GM12878 (cell line): ENCODE measurements at regions of chr10 and their contacts with region 1.

Region 1: GRCh38 chr10:117537436-117537903 is 5.1 kb upstream of the EMX2 start:
- DNase-seq: no peak
- ATAC-seq: peak; percentile 80
- H3K4me3 ChIP-seq: no peak overlapping the region
- H3K27ac ChIP-seq: no peak overlapping the region
- H3K4me1 ChIP-seq: peaks cover 7% of the 10 kb centered on the region
- H3K27me3 ChIP-seq: peaks cover 13 to 23% of the 10 kb centered on the region in 2 experiments
- CTCF ChIP-seq: peak; percentile 61 to 71 (median 67); a peak in 5 of 6 replicates
- EP300 ChIP-seq: no peak
- POLR2A ChIP-seq: no peak
- RAD21 ChIP-seq: peak; percentile 88

Region 2: DNA sequence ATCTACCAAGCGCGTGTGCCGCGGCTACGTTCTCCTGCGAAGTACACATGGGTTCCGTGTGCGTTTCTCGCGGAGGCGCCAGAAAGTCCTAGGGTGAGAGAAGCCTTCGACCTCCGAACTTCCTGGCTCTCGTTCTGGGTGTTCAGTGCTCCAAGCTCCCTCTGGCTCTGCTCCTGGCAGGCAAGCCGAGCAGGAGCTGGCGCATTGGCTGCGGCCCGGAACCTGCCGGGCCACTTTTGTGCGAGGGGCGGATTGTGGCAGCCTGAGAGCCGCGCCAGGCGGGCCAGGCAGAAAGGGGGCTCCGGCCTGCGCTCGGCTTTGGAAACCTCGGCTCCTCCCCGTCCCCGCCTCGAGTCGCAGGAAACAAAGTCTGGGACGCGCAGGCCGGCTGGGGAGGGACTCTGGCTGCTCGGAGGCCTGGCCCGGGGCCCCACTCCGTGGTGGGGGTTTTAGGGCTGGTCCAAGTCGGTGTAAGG is 14.7 kb after region 1 on chr10:
- CTCF ChIA-PET with region 1: interaction called, 8 read pairs
- POLR2A ChIA-PET with region 1: no interaction called
- RAD21 ChIA-PET with region 1: interaction called, 13 read pairs
- SMC1A ChIA-PET with region 1: interaction called, 13 read pairs
- in situ Hi-C with region 1: no loop called
- intact Hi-C with region 1: no loop called
- DNase-seq: no peak
- ATAC-seq: no peak
- H3K4me3 ChIP-seq: no peak overlapping the region
- H3K27ac ChIP-seq: no peak overlapping the region
- H3K4me1 ChIP-seq: no peaks in the 10 kb centered on the region
- H3K27me3 ChIP-seq: peaks cover 24 to 26% of the 10 kb centered on the region in 2 experiments
- CTCF ChIP-seq: no peak
- EP300 ChIP-seq: no peak
- POLR2A ChIP-seq: no peak
- RAD21 ChIP-seq: no peak

Region 3: GRCh38 chr10:117616179-117616578 is 78.7 kb after region 1 on chr10:
- CTCF ChIA-PET with region 1: interaction called, 16 read pairs
- POLR2A ChIA-PET with region 1: no interaction called
- RAD21 ChIA-PET with region 1: interaction called, 14 read pairs
- SMC1A ChIA-PET with region 1: interaction called, 30 read pairs
- in situ Hi-C with region 1: no loop called
- intact Hi-C with region 1: no loop called
- DNase-seq: peak; percentile 23
- ATAC-seq: peak; percentile 76
- H3K4me3 ChIP-seq: no peak overlapping the region
- H3K27ac ChIP-seq: no peak overlapping the region
- H3K4me1 ChIP-seq: peaks cover 7% of the 10 kb centered on the region
- H3K27me3 ChIP-seq: no peaks in the 10 kb centered on the region
- CTCF ChIP-seq: no peak
- EP300 ChIP-seq: peak in 1 of 2 experiments; percentile 78; a peak in 1 of 4 replicates
- POLR2A ChIP-seq: no peak
- RAD21 ChIP-seq: no peak

Region 4: GRCh38 chr10:117653170-117653515 is 115.7 kb after region 1 on chr10:
- CTCF ChIA-PET with region 1: interaction called, 10 read pairs
- POLR2A ChIA-PET with region 1: no interaction called
- RAD21 ChIA-PET with region 1: interaction called, 55 read pairs
- SMC1A ChIA-PET with region 1: interaction called, 21 read pairs
- in situ Hi-C with region 1: no loop called
- intact Hi-C with region 1: loop called (anchors 10 kb)
- DNase-seq: peak; percentile 98
- ATAC-seq: peak; percentile 87
- H3K4me3 ChIP-seq: no peak overlapping the region
- H3K27ac ChIP-seq: peak overlapping the region; percentile 75
- H3K4me1 ChIP-seq: peaks cover 46% of the 10 kb centered on the region
- H3K27me3 ChIP-seq: no peaks in the 10 kb centered on the region
- CTCF ChIP-seq: no peak
- EP300 ChIP-seq: peak; percentile 99
- POLR2A ChIP-seq: no peak
- RAD21 ChIP-seq: peak; percentile 17; the same call in 1 of the 2 replicates

Region 5: DNA sequence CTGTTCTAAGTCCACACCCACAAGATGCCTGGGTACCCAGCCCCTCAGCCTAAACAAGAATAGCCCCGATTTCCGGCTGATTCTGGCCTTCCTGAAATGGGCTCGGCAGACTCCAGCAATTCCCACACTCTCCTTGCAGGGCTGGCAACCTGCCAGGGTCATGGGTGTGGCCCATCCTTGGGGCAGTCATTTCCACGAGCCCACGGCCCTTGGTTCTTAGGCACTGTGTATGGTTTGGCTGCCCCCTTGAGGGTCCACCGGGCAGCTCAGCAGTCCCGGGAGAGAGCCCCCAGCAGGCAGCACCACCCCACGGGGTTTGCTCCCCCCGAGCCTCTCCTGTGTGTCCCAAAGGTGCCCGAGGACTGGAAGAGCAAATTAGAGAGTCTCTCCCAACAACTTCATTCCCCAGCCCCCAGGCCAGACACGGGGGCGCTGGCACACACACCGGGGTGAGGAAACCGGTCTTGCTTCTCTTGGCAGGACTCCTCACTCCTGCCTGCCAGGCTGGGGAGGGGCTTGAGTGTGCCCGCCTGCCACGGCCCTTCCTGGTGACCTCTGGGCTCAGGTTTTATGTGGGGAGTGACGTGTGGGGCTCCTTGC is 147.3 kb after region 1 on chr10:
- CTCF ChIA-PET with region 1: interaction called, 7 read pairs
- POLR2A ChIA-PET with region 1: no interaction called
- RAD21 ChIA-PET with region 1: interaction called, 4 read pairs
- SMC1A ChIA-PET with region 1: interaction called, 5 read pairs
- in situ Hi-C with region 1: no loop called
- intact Hi-C with region 1: loop called (anchors 10 kb)
- DNase-seq: no peak
- ATAC-seq: peak; percentile 68
- H3K4me3 ChIP-seq: no peak overlapping the region
- H3K27ac ChIP-seq: no peak overlapping the region
- H3K4me1 ChIP-seq: no peaks in the 10 kb centered on the region
- H3K27me3 ChIP-seq: peaks cover 0 to 12% of the 10 kb centered on the region in 2 experiments; a peak in 1 of 4 replicates
- CTCF ChIP-seq: peak; percentile 19 to 41 (median 39); a peak in 4 of 6 replicates
- EP300 ChIP-seq: no peak
- POLR2A ChIP-seq: no peak
- RAD21 ChIP-seq: peak; percentile 63

Region 6: DNA sequence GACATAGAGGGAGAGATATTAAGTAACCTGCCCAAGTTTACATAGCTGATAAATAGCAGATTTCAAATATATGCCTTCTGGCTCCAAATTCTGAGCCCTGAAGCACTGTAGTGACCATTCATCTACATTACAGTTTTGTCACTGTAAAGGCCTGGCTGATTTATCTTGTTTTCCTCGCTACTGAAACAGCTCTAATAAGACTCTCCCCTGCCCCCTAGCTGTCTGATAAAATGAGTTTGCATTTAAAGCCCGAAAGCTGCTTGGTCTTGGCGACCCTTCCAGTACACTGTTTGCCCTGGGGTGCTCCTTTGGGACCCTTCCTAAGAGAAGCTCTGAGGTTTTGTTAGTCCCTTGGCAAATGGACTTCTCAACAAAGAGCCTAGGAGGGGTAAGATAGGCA is 569.0 kb after region 1 on chr10:
- CTCF ChIA-PET with region 1: interaction called, 10 read pairs
- POLR2A ChIA-PET with region 1: no interaction called
- RAD21 ChIA-PET with region 1: interaction called, 4 read pairs
- SMC1A ChIA-PET with region 1: interaction called, 6 read pairs
- in situ Hi-C with region 1: no loop called
- intact Hi-C with region 1: loop called (anchors 5 kb)
- DNase-seq: no peak
- ATAC-seq: peak; percentile 70
- H3K4me3 ChIP-seq: no peak overlapping the region
- H3K27ac ChIP-seq: no peak overlapping the region
- H3K4me1 ChIP-seq: no peaks in the 10 kb centered on the region
- H3K27me3 ChIP-seq: no peaks in the 10 kb centered on the region; a peak in 1 of 4 replicates
- CTCF ChIP-seq: peak; percentile 39 to 59 (median 53); a peak in 5 of 6 replicates
- EP300 ChIP-seq: no peak
- POLR2A ChIP-seq: no peak
- RAD21 ChIP-seq: peak; percentile 66

Region 7: DNA sequence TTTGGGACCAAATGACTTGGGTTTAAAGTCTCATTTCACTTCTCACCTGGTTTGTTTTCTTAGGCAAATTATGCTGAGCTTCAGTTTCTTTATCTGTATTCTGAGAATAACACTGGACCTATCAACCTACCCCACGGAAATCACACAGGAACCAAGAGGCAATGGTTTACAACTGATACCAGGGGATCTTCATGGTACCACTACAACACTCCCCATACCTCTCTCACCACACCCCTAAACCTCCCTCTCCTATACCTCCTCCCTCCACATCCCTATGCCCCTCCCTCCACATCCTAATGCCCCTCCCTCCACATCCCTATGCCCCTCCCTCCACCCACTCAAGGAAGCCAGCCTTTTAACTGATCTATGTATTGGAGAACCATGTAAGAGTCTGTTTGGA is 794.8 kb after region 1 on chr10:
- CTCF ChIA-PET with region 1: no interaction called
- POLR2A ChIA-PET with region 1: no interaction called
- RAD21 ChIA-PET with region 1: no interaction called
- SMC1A ChIA-PET with region 1: no interaction called
- in situ Hi-C with region 1: no loop called
- intact Hi-C with region 1: no loop called
- DNase-seq: no peak
- ATAC-seq: peak; percentile 91
- H3K4me3 ChIP-seq: no peak overlapping the region
- H3K27ac ChIP-seq: no peak overlapping the region
- H3K4me1 ChIP-seq: no peaks in the 10 kb centered on the region
- H3K27me3 ChIP-seq: no peaks in the 10 kb centered on the region
- CTCF ChIP-seq: no peak
- EP300 ChIP-seq: no peak
- POLR2A ChIP-seq: no peak
- RAD21 ChIP-seq: no peak